ENCODE measurements at regions of chr2 and their contacts with region 1.

Region 1: DNA sequence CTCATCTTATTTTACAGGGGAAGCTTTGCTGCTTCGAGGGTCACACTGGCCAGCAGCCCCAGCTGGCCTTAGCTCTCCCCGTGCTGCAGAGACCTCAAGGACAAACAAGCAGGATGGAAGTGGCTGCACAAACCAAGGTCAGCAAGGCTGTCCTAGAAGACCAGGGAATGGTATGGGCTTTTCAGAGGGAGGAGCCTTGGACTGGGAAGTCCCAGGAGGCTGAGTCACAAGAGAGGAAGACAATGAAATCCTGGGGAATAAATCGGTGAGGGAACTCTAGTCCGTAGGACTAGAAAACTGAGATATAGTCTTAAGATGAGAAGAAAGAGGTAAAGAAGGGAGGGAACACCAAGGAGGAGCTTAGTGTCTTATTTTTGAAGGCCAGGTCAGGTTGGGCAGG is 15.7 kb downstream of the CREG2 start:
- DNase-seq: no peak

Region 2: DNA sequence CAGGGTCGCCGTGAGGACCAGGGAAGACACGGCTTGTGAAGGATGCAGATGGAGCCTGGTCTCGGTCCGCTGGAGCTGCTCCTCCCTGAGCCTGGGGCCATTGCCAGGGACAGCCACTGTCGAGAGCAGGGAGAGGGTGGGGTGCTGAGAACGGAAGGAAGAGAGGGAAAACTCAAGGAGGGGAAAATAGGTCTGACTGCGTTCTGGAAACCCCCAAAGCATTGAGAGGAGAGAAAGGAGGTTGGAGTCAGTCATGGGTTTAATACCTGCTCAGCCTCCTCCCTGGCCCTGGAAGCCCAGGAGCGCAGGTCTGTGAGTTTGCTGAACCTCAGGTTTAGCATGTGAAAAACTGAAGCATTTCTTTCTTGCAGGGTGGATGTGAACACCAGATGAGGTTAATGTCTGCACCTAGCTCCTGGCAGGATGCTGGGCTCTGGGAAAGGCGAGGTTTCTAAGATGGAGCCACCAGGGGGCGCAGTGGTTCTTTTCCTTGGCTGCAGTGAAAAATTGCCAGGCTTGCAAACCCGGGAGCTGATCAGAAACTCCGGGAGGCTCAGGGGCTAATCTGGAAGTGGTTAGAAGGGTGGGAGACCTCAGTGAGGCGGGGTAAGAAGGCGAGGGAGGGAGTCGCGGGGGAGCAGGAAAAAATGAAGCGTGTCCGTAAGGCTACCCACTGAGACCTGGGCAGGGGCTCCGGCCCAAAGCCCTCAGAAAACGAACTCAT is 29.6 kb before region 1 on chr2:
- intact Hi-C with region 1: no loop called
- DNase-seq: peak; percentile 93

Region 3: GRCh38 chr2:101396316-101396717 is 24.7 kb after region 1 on chr2:
- intact Hi-C with region 1: loop called in 1 of 2 experiments (anchors 1 kb)
- DNase-seq: no peak

Region 4: DNA sequence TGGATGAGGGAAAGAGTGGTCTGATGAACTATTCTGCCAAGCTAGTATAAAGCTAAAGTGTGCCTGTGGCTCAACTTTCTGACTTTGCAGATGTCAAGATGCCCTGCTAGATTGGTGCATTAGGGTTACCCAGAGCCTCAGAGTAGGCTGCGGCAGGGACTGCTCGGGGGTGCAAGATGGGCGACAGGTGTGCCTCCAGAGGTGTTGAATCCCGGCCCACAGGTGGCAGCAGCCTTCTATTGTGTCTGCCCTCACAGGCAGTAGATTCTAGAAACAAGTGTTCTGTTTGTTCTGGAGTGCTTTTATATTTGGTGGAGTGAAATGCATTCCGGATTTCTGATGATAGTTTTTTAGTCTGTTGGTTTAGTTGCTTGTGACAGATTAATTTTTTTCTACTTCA is 488.5 kb after region 1 on chr2:
- intact Hi-C with region 1: no loop called
- DNase-seq: no peak

Region 5: DNA sequence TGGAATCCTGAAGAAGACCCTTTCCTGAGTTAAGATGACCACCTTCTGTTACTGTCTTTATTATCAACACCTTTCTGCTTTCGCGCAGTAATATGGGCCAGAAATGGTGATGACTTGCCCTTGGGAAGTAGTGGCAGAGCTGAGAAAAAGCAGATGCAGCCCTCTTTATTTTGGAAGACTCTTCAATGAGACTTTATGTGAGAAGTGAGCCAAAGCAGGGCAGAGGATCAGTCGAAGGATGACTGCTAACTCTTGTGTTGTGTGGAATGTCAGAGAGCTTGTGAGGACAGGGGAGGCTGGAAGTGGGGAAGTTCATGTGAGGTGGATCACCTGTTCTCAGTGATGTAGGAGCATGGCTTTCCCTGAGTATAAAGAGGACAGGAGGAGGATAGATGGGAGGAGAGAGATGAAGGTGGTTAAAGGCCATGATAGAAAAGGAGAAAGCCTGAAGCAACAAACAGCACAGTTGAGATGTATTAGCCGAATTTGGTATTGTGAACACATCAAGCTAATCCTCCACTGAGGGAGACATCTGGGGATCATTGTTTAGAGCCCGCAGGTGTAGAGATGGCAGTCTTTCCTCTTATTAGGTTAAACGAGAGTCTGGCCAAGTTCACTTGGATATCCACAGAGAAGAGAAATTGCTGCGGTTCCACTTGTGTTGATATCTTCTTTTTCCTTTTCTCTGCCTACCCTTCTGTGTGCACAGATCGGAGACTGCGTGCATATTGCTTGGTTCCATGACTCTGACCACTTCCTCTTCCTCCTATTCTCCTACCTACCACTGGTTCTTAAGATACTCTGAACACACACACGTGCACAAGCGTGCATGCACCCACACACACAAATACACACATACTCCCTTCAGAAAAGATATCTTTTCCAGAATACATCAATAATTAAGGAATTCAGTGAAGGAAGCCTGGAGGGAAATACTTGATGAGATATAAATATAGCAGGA is 1315.1 kb after region 1 on chr2:
- intact Hi-C with region 1: loop called in 1 of 2 experiments (anchors 5 kb)
- DNase-seq: no peak

Measured in posterior vena cava (tissue), 2 donors.